Dendritic cell treated with granulocyte-macrophage colony-stimulating factor and Interleukin-4, amounts not matched to agents 40 ng/mL and 50 ng/mL, for 4 days (primary cell): ENCODE measurements at regions of chr6 and their contacts with region 1.

Region 1: DNA sequence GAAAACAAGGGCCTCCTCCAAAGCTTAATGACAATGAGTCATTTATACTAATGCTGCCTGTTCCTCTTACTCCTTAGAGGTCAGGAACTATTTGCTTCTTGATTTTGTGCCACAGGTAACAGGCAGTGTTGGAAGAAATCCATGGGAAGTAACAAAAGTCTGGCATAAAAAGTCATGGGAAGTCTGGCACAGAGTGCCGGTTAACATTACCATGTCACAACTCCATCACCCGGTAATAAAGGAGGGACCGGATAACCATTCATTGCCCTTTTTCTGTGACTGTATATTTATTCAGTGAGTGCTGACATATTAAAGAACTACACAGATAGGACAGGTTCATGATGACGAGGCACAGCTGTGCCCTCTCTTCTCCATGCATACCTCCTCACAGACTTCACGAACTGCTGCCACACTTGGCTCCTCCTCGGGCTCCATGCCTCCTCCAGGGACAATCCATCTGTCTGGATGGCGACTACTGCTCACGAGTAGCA is 50.9 kb downstream of the NUDT3 start:
- H3K4me3 Mint-ChIP-seq: no peak overlapping the region
- H3K27ac Mint-ChIP-seq: peak overlapping the region; percentile 19
- H3K4me1 Mint-ChIP-seq: peaks cover 78% of the 10 kb centered on the region
- H3K27me3 Mint-ChIP-seq: no peaks in the 10 kb centered on the region

Region 2: GRCh38 chr6:34236131-34236996 is 105.2 kb before region 1 on chr6 and contains the start of gene HMGA1:
- intact Hi-C with region 1: no loop called
- H3K4me3 Mint-ChIP-seq: peak within 1 kb of the TSS; percentile 78
- H3K27ac Mint-ChIP-seq: peak within 1 kb of the TSS; percentile 89
- H3K4me1 Mint-ChIP-seq: peaks cover 45% of the 10 kb centered on the region
- H3K27me3 Mint-ChIP-seq: no peaks in the 10 kb centered on the region

Region 3: GRCh38 chr6:34305982-34306708 is 35.4 kb before region 1 on chr6:
- intact Hi-C with region 1: loop called (anchors 5 kb)
- H3K4me3 Mint-ChIP-seq: no peak overlapping the region
- H3K27ac Mint-ChIP-seq: no peak overlapping the region
- H3K4me1 Mint-ChIP-seq: peaks cover 46% of the 10 kb centered on the region
- H3K27me3 Mint-ChIP-seq: no peaks in the 10 kb centered on the region

Region 4: GRCh38 chr6:34370361-34370760 is 28.8 kb after region 1 on chr6:
- intact Hi-C with region 1: loop called (anchors 5 kb)
- H3K4me3 Mint-ChIP-seq: no peak overlapping the region
- H3K27ac Mint-ChIP-seq: peak overlapping the region; percentile 80
- H3K4me1 Mint-ChIP-seq: peaks cover 45% of the 10 kb centered on the region
- H3K27me3 Mint-ChIP-seq: no peaks in the 10 kb centered on the region

Region 5: GRCh38 chr6:34656378-34657036 is 315.0 kb after region 1 on chr6:
- intact Hi-C with region 1: no loop called
- H3K4me3 Mint-ChIP-seq: peak overlapping the region; percentile 68
- H3K27ac Mint-ChIP-seq: peak overlapping the region; percentile 75
- H3K4me1 Mint-ChIP-seq: peaks cover 58% of the 10 kb centered on the region
- H3K27me3 Mint-ChIP-seq: no peaks in the 10 kb centered on the region